BJ (cell line): ENCODE measurements at regions of chr12 and their contacts with region 1.

Region 1: GRCh38 chr12:6195665-6196535 is 4.3 kb upstream of the CD9 start:
- DNase-seq: no peak
- H3K4me3 ChIP-seq: no peak overlapping the region
- H3K27me3 ChIP-seq: no peaks in the 10 kb centered on the region
- CTCF ChIP-seq: peak; percentile 94

Region 2: DNA sequence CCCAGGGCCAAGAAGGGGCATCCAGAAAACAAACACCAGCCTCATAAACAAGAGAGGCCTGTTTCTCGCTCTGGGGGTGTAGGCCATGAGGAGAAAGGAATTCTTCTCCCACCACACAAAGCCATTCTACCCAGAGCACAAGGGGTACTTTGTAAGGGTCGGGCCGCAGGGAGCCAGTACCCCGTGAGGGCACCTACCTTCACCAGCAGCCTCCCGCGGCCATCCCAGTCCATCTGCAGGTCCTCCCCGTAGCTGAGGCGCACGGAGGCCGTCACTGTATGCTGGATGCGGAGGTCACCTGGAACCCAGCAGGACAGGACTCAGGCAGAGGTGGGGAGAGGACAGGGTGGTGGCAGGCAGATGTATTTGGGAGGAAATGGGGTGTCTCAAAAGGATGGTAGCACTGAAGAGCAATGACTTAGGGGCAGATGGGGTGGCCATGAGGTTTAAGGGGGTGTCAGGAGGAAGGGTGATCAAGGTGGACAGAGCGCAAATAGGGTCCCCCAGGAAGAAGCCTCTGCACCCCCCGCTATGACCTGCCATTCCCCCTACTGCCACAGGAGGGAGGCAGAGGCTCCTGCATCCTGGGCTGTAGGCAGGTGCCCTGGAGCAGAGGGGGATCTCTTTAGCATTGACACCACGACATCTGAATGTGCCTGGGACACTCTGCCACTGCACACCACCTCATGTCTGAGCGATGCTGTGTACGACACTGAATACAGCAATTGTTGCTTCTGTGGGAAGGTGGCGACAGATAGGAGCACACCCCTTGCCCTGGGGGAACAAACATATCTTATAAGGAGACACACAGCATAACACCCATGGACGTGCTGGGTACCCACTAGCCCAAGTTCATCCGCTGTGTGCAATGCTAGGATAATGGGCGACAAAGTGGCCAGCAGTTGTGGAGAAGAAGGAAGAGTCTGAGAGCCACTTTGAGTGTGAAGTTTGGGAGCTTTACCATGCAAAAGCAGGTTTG is 132.9 kb before region 1 on chr12:
- CTCF ChIA-PET with region 1: interaction called, 28 read pairs
- POLR2A ChIA-PET with region 1: no interaction called
- DNase-seq: no peak
- H3K4me3 ChIP-seq: no peak overlapping the region
- H3K27me3 ChIP-seq: no peaks in the 10 kb centered on the region; the same call in 1 of the 2 replicates
- CTCF ChIP-seq: peak; percentile 98

Region 3: GRCh38 chr12:6084261-6084968 is 111.5 kb before region 1 on chr12:
- CTCF ChIA-PET with region 1: interaction called, 15 read pairs
- POLR2A ChIA-PET with region 1: no interaction called
- DNase-seq: no peak
- H3K4me3 ChIP-seq: no peak overlapping the region
- H3K27me3 ChIP-seq: no peaks in the 10 kb centered on the region
- CTCF ChIP-seq: no peak

Region 4: DNA sequence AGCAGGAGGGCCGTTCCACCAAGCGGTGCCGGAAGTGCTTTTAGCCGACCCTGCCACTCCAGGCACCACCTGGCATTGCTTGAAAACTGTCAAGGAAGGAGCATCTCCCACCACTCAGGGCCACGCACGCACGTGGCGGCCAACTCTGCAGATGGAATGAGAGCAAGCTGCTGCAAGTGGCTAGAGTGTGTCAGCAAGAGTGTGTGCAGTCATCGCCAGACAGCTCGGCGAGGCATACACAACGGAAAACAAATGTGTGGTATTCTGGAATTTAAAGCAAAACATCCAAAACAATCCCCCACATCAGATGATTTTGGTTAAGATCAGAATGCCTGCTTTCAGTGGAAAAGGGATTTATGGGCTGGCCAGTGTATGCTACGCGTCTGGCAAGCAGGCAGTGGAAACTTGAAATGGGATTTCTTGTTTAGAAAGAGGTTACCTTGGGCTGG is 15.5 kb after region 1 on chr12:
- CTCF ChIA-PET with region 1: interaction called, 35 read pairs
- POLR2A ChIA-PET with region 1: no interaction called
- DNase-seq: peak; percentile 88
- H3K4me3 ChIP-seq: no peak overlapping the region
- H3K27me3 ChIP-seq: no peaks in the 10 kb centered on the region
- CTCF ChIP-seq: no peak

Region 5: DNA sequence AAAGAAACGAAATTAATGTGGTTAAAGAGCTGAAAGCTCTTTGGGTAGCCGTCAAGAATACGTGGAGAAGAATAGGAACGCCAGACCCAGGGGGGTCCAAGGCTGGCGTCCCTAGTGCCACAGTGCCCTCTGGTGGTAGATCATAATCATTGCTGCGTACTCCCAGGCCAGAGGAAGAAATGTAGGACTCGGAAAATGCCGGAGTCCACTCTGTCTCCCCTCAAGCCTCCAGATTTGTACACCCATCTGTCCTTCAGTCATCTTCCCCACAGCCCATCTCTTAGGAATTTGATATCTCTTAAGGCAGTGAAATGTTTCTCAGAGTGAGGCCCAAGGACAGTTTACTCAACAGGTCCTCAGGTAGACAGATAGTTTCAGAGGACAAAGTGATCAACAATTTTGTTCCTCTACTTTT is 89.2 kb after region 1 on chr12:
- CTCF ChIA-PET with region 1: interaction called, 202 read pairs
- POLR2A ChIA-PET with region 1: no interaction called
- DNase-seq: no peak
- H3K4me3 ChIP-seq: no peak overlapping the region
- H3K27me3 ChIP-seq: no peaks in the 10 kb centered on the region
- CTCF ChIP-seq: peak; percentile 90

Region 6: DNA sequence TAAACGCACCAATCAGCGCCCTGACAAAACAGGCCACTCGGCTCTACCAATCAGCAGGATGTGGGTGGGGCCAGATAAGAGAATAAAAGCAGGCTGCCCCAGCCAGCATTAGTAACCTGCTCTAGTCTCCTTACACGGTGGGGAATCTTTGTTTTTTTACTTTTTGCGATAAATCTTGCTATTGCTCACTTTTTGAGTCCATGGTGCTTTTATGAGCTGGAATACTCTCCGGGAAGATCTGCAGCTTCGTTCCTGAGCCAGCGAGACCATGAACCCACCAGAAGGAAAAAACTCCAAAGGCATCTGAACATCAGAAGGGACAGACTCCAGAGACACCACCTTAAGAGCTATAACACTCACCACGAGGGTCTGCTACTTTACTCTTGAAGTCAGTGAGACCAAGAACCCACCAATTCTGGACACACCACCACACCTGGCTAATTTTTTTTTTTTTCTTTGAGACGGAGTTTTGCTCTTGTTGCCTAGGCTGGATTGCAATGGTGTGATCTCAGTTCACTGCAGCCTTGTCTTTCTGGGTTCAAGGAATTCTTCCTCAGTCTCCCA is 521.1 kb after region 1 on chr12:
- CTCF ChIA-PET with region 1: no interaction called
- POLR2A ChIA-PET with region 1: no interaction called
- DNase-seq: no peak
- H3K4me3 ChIP-seq: no peak overlapping the region
- H3K27me3 ChIP-seq: no peaks in the 10 kb centered on the region
- CTCF ChIP-seq: no peak